ENCODE measurements at regions of chr18 and their contacts with region 1.

Region 1: GRCh38 chr18:11784674-11785457 is 66.3 kb upstream of the CHMP1B start:
- DNase-seq: no peak
- H3K4me3 ChIP-seq: no peak overlapping the region
- H3K27ac ChIP-seq: no peak overlapping the region
- H3K4me1 ChIP-seq: no peaks in the 10 kb centered on the region
- H3K27me3 ChIP-seq: no peaks in the 10 kb centered on the region
- CTCF ChIP-seq: no peak
- POLR2A ChIP-seq: no peak

Region 2: GRCh38 chr18:11851146-11851805 is 66.4 kb after region 1 on chr18 and contains the start of gene CHMP1B:
- intact Hi-C with region 1: loop called (anchors 5 kb)
- DNase-seq: peak; percentile 98
- H3K4me3 ChIP-seq: peak within 1 kb of the TSS; percentile 77 to 94
- H3K27ac ChIP-seq: peak within 1 kb of the TSS; percentile 87 to 91
- H3K4me1 ChIP-seq: no peaks in the 10 kb centered on the region
- H3K27me3 ChIP-seq: no peaks in the 10 kb centered on the region
- CTCF ChIP-seq: peak in 2 of 4 experiments; percentile 28 to 36
- POLR2A ChIP-seq: peak; percentile 98
- total RNA-seq, gene CHMP1B: 42.8 to 50.0 TPM

Region 3: GRCh38 chr18:12005538-12006487 is 220.9 kb after region 1 on chr18:
- intact Hi-C with region 1: no loop called
- DNase-seq: no peak
- H3K4me3 ChIP-seq: no peak overlapping the region
- H3K27ac ChIP-seq: peak overlapping the region; percentile 41 to 68
- H3K4me1 ChIP-seq: no peaks in the 10 kb centered on the region
- H3K27me3 ChIP-seq: no peaks in the 10 kb centered on the region
- CTCF ChIP-seq: no peak
- POLR2A ChIP-seq: no peak